Astrocyte of the cerebellum (primary cell): ENCODE measurements at regions of chr14 and their contacts with region 1.

Region 1: DNA sequence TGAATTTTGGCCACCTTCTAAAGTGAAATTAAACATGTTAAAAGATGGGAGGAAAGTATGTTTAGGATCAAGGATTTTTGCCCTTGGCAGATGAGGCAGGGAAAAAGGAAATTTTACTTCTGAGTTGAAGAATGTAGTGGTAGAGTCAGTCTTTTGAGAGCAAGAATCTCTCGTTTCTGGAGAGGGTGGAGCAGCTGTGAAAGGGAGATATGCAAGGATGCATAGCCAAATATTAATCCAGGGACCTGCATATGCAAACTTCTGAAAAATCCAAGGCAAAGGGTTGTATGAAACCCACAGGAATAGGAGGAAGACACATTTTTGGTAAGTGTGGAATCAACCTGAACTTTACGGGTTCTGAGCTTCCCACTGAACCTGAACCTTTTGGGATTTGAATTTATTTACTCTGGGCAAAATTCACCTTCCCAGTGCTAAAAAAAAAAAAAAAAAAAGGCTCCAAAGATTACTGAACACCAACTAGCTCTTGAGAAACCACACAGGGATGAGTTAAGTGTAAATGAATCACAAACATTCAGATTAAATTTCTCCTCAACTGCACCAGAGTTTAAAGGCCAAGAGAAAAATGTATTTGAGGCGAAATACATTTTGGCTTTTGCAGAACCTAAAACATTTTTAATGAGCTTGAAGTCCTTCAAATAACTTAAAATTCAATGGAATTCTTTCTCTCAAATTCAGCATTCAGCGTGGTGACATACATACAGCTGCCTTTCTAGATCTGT is 187.1 kb upstream of the CDKN3 start:
- DNase-seq: no peak
- H3K4me3 ChIP-seq: no peak overlapping the region
- CTCF ChIP-seq: no peak

Region 2: DNA sequence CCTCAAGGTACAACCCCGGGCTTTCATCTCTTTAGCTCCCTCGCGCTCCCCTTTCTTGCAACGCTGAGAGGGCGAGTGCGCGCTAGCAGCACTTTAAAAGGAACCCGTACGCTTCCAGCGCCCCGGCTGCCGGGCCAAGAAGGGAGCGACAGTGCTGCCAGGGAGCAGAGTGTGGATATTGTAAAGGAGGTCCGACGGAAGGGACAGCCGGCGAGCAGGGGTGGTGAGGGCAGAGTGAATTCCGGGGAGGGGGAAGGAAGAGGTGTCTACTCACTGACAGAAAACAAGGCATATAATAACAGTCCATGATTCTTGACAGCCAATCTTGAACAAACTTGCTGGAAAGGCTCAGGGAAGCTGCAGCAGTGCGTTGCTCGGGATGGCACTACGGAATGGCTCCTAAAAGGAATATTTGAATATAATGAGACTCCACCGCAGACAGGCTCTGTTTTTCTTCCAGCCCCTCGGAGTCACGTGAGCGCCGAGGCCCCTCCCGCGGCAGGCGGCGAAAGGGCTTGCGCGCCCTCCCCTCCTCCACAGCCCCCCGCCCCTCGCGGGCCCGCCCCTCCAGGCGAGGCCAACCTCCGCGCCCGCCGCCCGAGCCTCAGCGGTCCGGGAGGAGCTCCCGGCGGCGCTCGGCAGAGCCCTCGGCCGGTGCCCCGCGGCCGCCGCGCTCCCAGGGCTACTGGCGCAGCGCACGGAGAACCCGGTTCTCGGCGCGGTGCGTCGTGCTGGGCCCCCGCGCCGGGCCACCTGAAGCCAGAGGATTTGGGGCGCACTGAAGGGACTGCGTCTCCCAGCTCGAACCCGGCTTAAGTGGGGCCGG is 256.5 kb before region 1 on chr14:
- in situ Hi-C with region 1: no loop called
- DNase-seq: peak; percentile 73
- H3K4me3 ChIP-seq: peak overlapping the region; percentile 82
- CTCF ChIP-seq: no peak

Region 3: DNA sequence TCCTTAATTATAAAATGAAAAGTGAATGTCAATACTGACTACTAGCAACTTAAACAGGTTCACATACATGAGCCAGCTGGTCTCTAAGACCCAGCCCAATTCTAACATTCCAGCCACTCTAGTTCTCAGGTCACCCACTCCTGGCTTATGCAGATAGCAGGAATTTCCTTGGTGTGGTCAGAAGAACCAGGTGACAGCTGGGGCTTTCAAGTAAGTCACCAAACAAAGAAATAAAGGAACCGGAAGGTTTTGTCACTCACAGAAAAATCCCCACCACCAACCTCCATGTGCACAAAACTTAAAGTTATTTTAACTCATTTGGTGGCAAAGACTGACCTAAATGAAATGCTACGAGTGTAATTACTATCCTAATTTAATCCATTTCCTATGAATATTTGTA is 57.5 kb after region 1 on chr14:
- in situ Hi-C with region 1: no loop called
- DNase-seq: no peak
- H3K4me3 ChIP-seq: no peak overlapping the region
- CTCF ChIP-seq: no peak

Region 4: GRCh38 chr14:54299410-54300363 is 90.0 kb after region 1 on chr14:
- in situ Hi-C with region 1: loop called (anchors 5 kb)
- DNase-seq: peak; percentile 83
- H3K4me3 ChIP-seq: no peak overlapping the region
- CTCF ChIP-seq: no peak